HCT116 (cell line): ENCODE measurements at regions of chr7 and their contacts with region 1.

Region 1: GRCh38 chr7:97390915-97391593 is 273.6 kb downstream of the SDHAF3 start:
- DNase-seq: no peak
- ATAC-seq: no peak
- H3K4me3 ChIP-seq: no peak overlapping the region
- H3K27ac ChIP-seq: no peak overlapping the region
- H3K4me1 ChIP-seq: no peaks in the 10 kb centered on the region; a peak in 1 of 4 replicates
- H3K27me3 ChIP-seq: no peaks in the 10 kb centered on the region
- CTCF ChIP-seq: no peak
- POLR2A ChIP-seq: no peak
- RAD21 ChIP-seq: no peak

Region 2: GRCh38 chr7:97342512-97342911 is 48.5 kb before region 1 on chr7:
- CTCF ChIA-PET with region 1: no interaction called
- POLR2A ChIA-PET with region 1: no interaction called
- RAD21 ChIA-PET with region 1: no interaction called
- intact Hi-C with region 1: loop called (anchors 5 kb)
- DNase-seq: no peak
- ATAC-seq: no peak
- H3K4me3 ChIP-seq: no peak overlapping the region
- H3K27ac ChIP-seq: no peak overlapping the region
- H3K4me1 ChIP-seq: no peaks in the 10 kb centered on the region
- H3K27me3 ChIP-seq: 0 out of 2 replicates have a peak, but pooled peaks cover 7% of the 10 kb centered on the region
- CTCF ChIP-seq: no peak
- POLR2A ChIP-seq: no peak
- RAD21 ChIP-seq: no peak

Region 3: GRCh38 chr7:97401398-97401797 is 10.3 kb after region 1 on chr7:
- CTCF ChIA-PET with region 1: no interaction called
- POLR2A ChIA-PET with region 1: no interaction called
- RAD21 ChIA-PET with region 1: no interaction called
- intact Hi-C with region 1: no loop called
- DNase-seq: no peak
- ATAC-seq: no peak
- H3K4me3 ChIP-seq: no peak overlapping the region
- H3K27ac ChIP-seq: no peak overlapping the region
- H3K4me1 ChIP-seq: no peaks in the 10 kb centered on the region
- H3K27me3 ChIP-seq: peaks cover 48% of the 10 kb centered on the region
- CTCF ChIP-seq: no peak
- POLR2A ChIP-seq: no peak
- RAD21 ChIP-seq: no peak

Region 4: GRCh38 chr7:97601941-97602457 is 210.9 kb after region 1 on chr7:
- CTCF ChIA-PET with region 1: no interaction called
- POLR2A ChIA-PET with region 1: no interaction called
- RAD21 ChIA-PET with region 1: no interaction called
- intact Hi-C with region 1: no loop called
- DNase-seq: no peak
- ATAC-seq: no peak
- H3K4me3 ChIP-seq: no peak overlapping the region
- H3K27ac ChIP-seq: no peak overlapping the region
- H3K4me1 ChIP-seq: no peaks in the 10 kb centered on the region
- H3K27me3 ChIP-seq: no peaks in the 10 kb centered on the region; the same call in 1 of the 2 replicates
- CTCF ChIP-seq: no peak
- POLR2A ChIP-seq: no peak
- RAD21 ChIP-seq: no peak